Aorta (tissue), 5 donors: ENCODE measurements at regions of chr2 and their contacts with region 1.

Region 1: DNA sequence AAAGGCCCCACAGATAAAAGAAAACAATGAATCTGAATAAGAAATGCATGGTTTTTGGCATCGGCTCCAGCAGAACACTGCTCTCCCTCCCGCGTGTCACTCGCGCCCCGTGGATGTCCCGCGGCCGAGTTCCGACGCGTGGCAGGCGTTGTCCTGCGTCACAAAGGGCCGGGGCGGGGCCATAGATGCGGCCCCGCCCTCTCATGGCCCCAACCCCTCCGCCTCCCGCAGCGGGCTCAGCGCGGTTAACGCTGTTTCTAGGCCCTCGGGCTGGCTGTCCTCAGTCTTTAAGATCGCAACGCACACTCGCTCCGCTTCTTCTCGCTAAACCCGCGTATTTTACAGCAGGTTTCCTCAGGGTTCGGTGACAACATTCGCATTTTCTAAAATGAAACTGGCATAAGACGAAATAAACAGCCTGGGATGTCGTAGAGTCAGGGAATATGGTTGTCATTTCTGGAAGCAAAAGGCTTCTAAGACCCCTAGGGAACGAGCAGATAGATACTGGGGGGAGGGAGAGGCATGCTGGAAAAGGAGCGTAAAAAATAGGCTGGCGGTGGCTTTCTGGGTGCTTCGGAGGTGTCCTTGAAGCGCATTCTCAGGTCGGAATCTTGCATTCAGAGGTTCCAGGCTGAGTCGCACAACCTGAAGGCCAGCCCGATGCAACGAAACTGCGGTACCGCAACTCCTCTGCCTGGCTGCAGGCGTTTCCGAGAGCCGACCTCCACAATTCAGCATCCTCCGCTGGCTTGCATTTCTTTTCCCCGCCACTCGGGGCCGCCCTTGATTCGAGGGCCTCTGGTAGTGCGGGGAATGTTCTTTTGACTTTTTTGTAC is at the start of gene FKBP7:
- DNase-seq: peak; percentile 91 to 95
- ATAC-seq: peak; percentile 93
- H3K4me3 ChIP-seq: peak within 1 kb of the TSS; percentile 78 to 88
- H3K27ac ChIP-seq: peak within 1 kb of the TSS; percentile 47 to 90
- H3K4me1 ChIP-seq: peaks cover 0 to 4% of the 10 kb centered on the region in 2 donors
- H3K27me3 ChIP-seq: no peaks in the 10 kb centered on the region
- total RNA-seq, gene FKBP7: 23.6 to 28.0 TPM

Region 2: GRCh38 chr2:178241844-178242551 is 236.7 kb before region 1 on chr2:
- intact Hi-C with region 1: no loop called
- DNase-seq: no peak
- ATAC-seq: peak; percentile 89
- H3K4me3 ChIP-seq: no peak overlapping the region
- H3K27ac ChIP-seq: no peak overlapping the region
- H3K4me1 ChIP-seq: no peaks in the 10 kb centered on the region
- H3K27me3 ChIP-seq: no peaks in the 10 kb centered on the region

Region 3: GRCh38 chr2:178268435-178268834 is 210.2 kb before region 1 on chr2:
- intact Hi-C with region 1: no loop called
- DNase-seq: no peak
- ATAC-seq: no peak
- H3K4me3 ChIP-seq: no peak overlapping the region
- H3K27ac ChIP-seq: no peak overlapping the region
- H3K4me1 ChIP-seq: no peaks in the 10 kb centered on the region
- H3K27me3 ChIP-seq: no peaks in the 10 kb centered on the region

Region 4: GRCh38 chr2:178414266-178415247 is 64.1 kb before region 1 on chr2:
- intact Hi-C with region 1: loop called in 1 of 2 experiments (anchors 2 kb)
- DNase-seq: peak; percentile 93
- ATAC-seq: peak; percentile 97
- H3K4me3 ChIP-seq: peak overlapping the region; percentile 53 to 66
- H3K27ac ChIP-seq: peak overlapping the region; percentile 50 to 83
- H3K4me1 ChIP-seq: no peaks in the 10 kb centered on the region
- H3K27me3 ChIP-seq: no peaks in the 10 kb centered on the region

Region 5: GRCh38 chr2:178450774-178451525 is 27.7 kb before region 1 on chr2 and contains the starts of genes PJVK and PRKRA:
- intact Hi-C with region 1: loop called (anchors 1 to 2 kb)
- DNase-seq: peak; percentile 99 to 100
- ATAC-seq: peak; percentile 99
- H3K4me3 ChIP-seq: peak within 1 kb of the TSS; percentile 55 to 81
- H3K27ac ChIP-seq: peak within 1 kb of the TSS; percentile 96 to 99
- H3K4me1 ChIP-seq: peaks cover 3 to 10% of the 10 kb centered on the region in 2 donors
- H3K27me3 ChIP-seq: no peaks in the 10 kb centered on the region
- total RNA-seq, gene PJVK: 2.2 to 8.4 TPM
- total RNA-seq, gene PRKRA: 55.6 to 69.9 TPM

Region 6: DNA sequence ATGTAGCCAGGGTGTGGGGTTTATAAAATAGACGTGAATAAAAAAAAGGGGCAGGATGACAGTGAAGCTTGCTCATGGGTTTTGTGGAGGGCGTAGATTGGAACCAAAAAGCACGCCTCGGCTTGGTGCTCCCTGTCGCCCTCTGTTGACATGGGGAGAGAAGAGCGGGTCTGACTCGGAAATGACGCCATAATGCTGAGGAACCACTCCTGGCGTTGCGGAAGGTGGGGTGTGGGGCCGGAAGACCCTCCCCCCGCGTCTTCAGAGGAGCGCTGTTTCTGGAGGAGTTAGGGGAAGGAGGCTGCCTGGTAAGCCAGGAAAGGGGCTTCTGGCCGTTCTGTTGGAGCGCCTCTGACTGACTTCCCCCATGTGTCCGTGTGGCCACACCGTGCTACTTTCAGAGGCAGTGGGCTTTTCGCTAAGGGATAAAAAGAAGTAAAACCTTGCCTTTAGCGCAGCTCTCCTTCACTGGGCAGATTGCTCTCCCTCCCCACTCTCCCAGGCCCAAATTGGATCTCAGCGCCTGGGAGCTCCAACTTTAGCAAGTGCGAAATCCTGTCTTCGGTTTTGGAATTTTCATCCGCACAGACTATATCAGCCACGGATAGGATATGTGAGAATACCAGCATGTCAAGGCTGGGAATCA is 44.4 kb after region 1 on chr2:
- intact Hi-C with region 1: loop called in 1 of 2 experiments (anchors 5 kb)
- DNase-seq: peak; percentile 89 to 91
- ATAC-seq: peak; percentile 96
- H3K4me3 ChIP-seq: peak overlapping the region; percentile 66 to 84
- H3K27ac ChIP-seq: peak overlapping the region in 1 of 2 donors; percentile 60
- H3K4me1 ChIP-seq: no peaks in the 10 kb centered on the region
- H3K27me3 ChIP-seq: no peaks in the 10 kb centered on the region